MCF 10A (cell line): ENCODE measurements at regions of chr15 and their contacts with region 1.

Region 1: GRCh38 chr15:98904544-98904943 is 103.0 kb downstream of the PGPEP1L start:
- DNase-seq: peak; percentile 70
- H3K4me3 Mint-ChIP-seq: no peak overlapping the region
- H3K27ac Mint-ChIP-seq: peak overlapping the region; percentile 51
- H3K4me1 Mint-ChIP-seq: peaks cover 37% of the 10 kb centered on the region
- H3K27me3 Mint-ChIP-seq: no peaks in the 10 kb centered on the region
- CTCF ChIP-seq: peak; percentile 52

Region 2: DNA sequence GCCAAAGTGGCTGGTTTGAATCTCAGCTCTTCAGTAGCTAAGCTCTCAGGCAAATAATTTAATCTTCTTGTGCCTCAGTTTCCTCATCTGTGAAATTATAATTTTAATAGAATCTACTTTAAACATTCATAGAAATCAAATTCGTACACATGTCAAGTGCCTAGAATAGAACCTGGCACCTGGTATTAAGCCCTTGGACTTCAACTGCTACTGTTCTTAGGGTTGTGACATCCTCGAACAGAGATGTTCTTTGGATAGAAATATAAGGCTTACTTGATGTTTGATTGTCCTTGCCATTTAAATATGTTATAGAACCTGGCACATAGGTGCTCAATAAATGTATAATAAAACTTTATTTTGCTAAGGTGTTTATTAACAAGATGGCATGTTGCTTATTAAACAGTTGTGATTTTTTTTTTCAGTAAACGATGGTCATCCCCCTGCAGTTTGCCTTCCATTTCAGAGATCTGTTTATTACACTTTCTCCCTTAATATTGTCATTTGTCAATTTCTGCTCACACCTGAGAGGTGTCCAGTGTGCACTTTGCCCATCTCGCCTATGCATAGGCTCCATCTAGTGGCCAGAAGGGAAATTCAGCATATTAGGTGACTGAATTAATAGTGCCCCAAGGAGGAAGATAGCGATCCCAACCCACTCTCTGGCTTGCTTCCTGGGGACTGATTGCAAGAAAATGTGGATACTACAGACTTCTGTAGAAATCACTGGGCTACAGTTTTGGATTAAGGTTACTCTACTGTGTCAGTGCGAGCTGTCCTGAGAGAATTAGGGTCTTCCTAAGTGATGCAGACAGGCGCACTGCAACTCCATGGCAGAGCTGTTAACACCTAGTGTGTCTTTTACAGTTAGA is 245.5 kb before region 1 on chr15:
- CTCF ChIA-PET with region 1: interaction called, 8 read pairs
- POLR2A ChIA-PET with region 1: interaction called, 22 read pairs
- intact Hi-C with region 1: loop called (anchors 2 kb)
- DNase-seq: peak; percentile 76
- H3K4me3 Mint-ChIP-seq: no peak overlapping the region
- H3K27ac Mint-ChIP-seq: peak overlapping the region; percentile 3
- H3K4me1 Mint-ChIP-seq: peaks cover 44% of the 10 kb centered on the region
- H3K27me3 Mint-ChIP-seq: no peaks in the 10 kb centered on the region
- CTCF ChIP-seq: peak; percentile 69

Region 3: GRCh38 chr15:98744506-98744905 is 160.0 kb before region 1 on chr15:
- CTCF ChIA-PET with region 1: no interaction called
- POLR2A ChIA-PET with region 1: no interaction called
- intact Hi-C with region 1: no loop called
- DNase-seq: no peak
- H3K4me3 Mint-ChIP-seq: no peak overlapping the region
- H3K27ac Mint-ChIP-seq: peak overlapping the region; percentile 59
- H3K4me1 Mint-ChIP-seq: peaks cover 36% of the 10 kb centered on the region
- H3K27me3 Mint-ChIP-seq: no peaks in the 10 kb centered on the region
- CTCF ChIP-seq: no peak

Region 4: DNA sequence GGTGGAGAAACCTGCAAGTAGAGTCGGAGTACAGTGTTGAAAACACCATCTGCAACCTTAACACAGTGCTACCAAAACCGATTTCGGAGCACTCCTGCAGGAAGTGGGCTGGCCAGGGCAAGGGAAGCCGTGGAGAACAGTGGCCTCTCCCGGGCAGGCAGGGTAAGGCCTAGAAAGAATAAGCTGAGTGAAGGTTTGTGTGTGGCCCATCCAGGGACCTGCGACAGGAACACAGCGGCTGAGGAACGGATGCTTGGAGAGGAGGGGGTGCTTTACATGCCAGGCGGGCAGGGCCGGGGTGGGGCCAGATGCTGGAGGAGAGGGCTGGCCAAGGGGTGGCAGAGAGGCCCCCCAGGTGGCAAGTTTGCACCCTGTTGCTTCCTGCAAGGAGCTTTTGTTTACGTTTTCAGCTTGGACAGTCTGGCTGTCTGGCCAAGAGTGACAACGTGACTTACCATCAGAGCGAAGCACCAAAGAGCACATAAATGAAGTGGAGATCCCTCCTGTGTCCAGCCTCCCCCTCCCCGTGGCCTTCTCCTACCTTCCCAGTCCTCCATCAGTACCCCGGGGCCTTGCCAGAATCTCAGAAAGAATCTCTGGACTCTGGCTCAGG is 53.5 kb before region 1 on chr15:
- CTCF ChIA-PET with region 1: no interaction called
- POLR2A ChIA-PET with region 1: interaction called, 3 read pairs
- intact Hi-C with region 1: loop called (anchors 1 kb)
- DNase-seq: peak; percentile 63
- H3K4me3 Mint-ChIP-seq: peak overlapping the region; percentile 76
- H3K27ac Mint-ChIP-seq: peak overlapping the region; percentile 74
- H3K4me1 Mint-ChIP-seq: peaks cover 27% of the 10 kb centered on the region
- H3K27me3 Mint-ChIP-seq: no peaks in the 10 kb centered on the region
- CTCF ChIP-seq: peak; percentile 24

Region 5: DNA sequence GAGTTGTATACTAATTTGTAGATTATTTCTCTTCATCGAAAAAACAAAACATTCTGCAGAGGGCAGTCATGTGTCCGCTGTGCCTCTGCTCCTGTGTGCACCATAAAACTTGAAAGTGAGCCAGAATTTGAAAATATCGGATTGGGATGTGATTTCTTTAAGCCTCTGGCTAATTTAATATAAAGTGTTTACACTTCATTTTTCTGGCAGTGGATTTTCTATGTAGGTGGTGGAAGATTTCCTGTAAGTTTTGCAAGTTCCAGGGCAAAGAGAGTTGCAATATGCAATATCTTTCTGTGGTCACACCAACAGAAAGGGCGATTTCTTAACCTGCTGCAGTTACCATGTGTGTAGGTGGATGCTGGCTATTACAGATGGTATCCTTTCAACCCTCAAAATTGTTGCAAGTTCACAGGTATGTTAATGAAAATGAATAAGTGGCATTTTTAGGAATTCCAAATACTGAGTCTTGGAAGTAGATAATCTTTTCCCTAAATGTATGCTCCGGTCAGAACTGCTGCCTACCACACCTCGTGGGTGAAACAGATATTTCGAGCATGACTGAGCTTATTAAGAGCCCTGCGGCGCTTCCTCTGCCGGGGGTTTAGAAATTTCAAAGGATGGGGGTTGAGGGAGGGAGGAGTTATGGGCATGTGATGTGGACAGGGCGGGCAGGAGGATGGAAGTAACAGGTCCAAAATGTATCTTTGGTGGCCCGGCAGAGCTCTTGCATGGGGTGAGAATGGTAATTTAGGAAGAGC is 30.9 kb before region 1 on chr15:
- CTCF ChIA-PET with region 1: interaction called, 36 read pairs
- POLR2A ChIA-PET with region 1: interaction called, 102 read pairs
- intact Hi-C with region 1: no loop called
- DNase-seq: peak; percentile 97
- H3K4me3 Mint-ChIP-seq: peak overlapping the region; percentile 69
- H3K27ac Mint-ChIP-seq: peak overlapping the region; percentile 80
- H3K4me1 Mint-ChIP-seq: peaks cover 47% of the 10 kb centered on the region
- H3K27me3 Mint-ChIP-seq: no peaks in the 10 kb centered on the region
- CTCF ChIP-seq: no peak

Region 6: DNA sequence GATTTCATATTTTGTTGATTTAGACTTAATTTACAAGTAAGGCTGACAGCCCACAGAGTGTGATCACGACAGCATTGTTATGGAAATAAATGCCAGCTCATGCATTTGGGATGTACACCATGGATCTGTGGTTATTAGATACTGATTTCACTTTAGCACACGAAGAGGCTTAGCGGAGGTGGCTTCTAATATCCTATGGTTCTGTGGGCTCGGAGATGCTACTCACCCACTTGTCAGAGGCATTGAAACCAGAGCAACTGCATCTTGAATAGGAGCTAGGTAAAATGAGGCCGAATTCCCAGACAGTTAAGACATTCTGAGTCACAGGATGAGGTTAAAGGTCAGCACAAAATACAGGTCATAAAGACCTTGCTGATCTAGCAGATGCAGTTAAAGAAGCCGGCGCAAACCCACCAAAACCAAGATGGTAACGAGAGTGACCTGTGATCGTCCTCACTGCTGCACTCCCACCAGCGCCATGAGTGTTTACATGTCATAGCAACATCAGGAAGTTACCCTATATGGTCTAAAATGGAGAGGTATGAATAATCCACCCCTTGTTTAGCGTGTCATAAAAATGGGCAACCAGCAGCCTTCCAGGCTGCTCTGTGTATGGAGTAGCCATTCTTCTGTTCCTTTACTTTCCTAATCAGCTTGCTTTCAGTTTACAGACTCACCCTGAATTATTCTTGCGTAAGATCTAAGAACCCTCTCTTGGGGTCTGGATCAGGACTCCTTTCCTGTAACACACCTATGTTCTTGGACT is 14.4 kb before region 1 on chr15:
- CTCF ChIA-PET with region 1: interaction called, 18 read pairs
- POLR2A ChIA-PET with region 1: interaction called, 12 read pairs
- intact Hi-C with region 1: no loop called
- DNase-seq: peak; percentile 59
- H3K4me3 Mint-ChIP-seq: peak overlapping the region; percentile 35
- H3K27ac Mint-ChIP-seq: peak overlapping the region; percentile 89
- H3K4me1 Mint-ChIP-seq: peaks cover 45% of the 10 kb centered on the region
- H3K27me3 Mint-ChIP-seq: no peaks in the 10 kb centered on the region
- CTCF ChIP-seq: no peak

Region 7: GRCh38 chr15:98933406-98933805 is 28.9 kb after region 1 on chr15:
- CTCF ChIA-PET with region 1: no interaction called
- POLR2A ChIA-PET with region 1: no interaction called
- intact Hi-C with region 1: no loop called
- DNase-seq: no peak
- H3K4me3 Mint-ChIP-seq: no peak overlapping the region
- H3K27ac Mint-ChIP-seq: no peak overlapping the region
- H3K4me1 Mint-ChIP-seq: no peaks in the 10 kb centered on the region
- H3K27me3 Mint-ChIP-seq: no peaks in the 10 kb centered on the region
- CTCF ChIP-seq: no peak

Region 8: DNA sequence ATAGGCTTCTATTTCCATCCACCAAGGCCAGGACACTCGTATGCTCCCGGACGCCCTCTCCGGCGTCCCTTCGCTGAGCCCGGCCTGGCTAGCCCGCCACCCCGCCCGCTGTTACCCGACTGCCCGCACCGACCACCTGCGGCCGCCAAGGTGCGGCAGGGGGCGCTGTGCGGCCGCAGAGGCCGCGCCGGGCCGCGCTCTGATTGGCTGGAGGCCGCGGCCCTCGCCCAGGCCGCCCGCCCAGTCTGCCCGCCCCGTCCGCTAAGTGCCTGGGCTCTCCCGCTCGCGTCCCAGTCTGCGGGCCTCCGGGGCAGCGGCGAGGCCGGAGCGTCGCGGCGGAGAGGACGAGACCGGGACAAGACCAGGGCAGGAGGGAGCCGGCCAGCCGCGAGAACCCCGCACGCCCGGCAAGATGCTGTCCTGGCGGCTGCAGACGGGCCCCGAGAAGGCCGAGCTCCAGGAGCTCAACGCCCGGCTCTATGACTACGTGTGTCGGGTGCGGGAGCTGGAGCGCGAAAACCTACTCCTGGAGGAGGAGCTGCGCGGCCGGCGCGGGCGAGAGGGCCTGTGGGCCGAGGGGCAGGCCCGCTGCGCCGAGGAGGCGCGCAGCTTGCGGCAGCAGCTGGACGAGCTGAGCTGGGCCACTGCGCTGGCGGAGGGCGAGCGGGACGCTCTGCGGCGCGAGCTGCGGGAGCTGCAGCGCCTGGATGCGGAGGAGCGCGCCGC is 200.4 kb after region 1 on chr15 and contains the start of gene SYNM:
- CTCF ChIA-PET with region 1: no interaction called
- POLR2A ChIA-PET with region 1: no interaction called
- intact Hi-C with region 1: no loop called
- DNase-seq: peak; percentile 49
- H3K4me3 Mint-ChIP-seq: peak within 1 kb of the TSS; percentile 62
- H3K27ac Mint-ChIP-seq: no peak within 1 kb of the TSS
- H3K4me1 Mint-ChIP-seq: peaks cover 6% of the 10 kb centered on the region
- H3K27me3 Mint-ChIP-seq: no peaks in the 10 kb centered on the region
- CTCF ChIP-seq: peak; percentile 45
- total RNA-seq, gene SYNM: 0.12 TPM in 2 replicates

Region 9: GRCh38 chr15:99163271-99164062 is 258.9 kb after region 1 on chr15:
- CTCF ChIA-PET with region 1: no interaction called
- POLR2A ChIA-PET with region 1: no interaction called
- intact Hi-C with region 1: no loop called
- DNase-seq: no peak
- H3K4me3 Mint-ChIP-seq: no peak overlapping the region
- H3K27ac Mint-ChIP-seq: no peak overlapping the region
- H3K4me1 Mint-ChIP-seq: no peaks in the 10 kb centered on the region
- H3K27me3 Mint-ChIP-seq: no peaks in the 10 kb centered on the region
- CTCF ChIP-seq: no peak